Activated CD4-positive, alpha-beta memory T cell treated with anti-CD3 and anti-CD28 coated beads, Interleukin-2, amount 10 ng/mL, durations not matched to agents 7 days and 5 days (primary cell): ENCODE measurements at regions of chr15 and their contacts with region 1.

Region 1: GRCh38 chr15:63945007-63945788 is 101.1 kb downstream of the DAPK2 start:
- DNase-seq: peak; percentile 76
- H3K4me3 Mint-ChIP-seq: no peak overlapping the region
- H3K27ac Mint-ChIP-seq: no peak overlapping the region
- H3K4me1 Mint-ChIP-seq: peaks cover 18% of the 10 kb centered on the region
- H3K27me3 Mint-ChIP-seq: no peaks in the 10 kb centered on the region

Region 2: GRCh38 chr15:63876085-63876772 is 69.0 kb before region 1 on chr15:
- CTCF ChIA-PET with region 1: no interaction called
- POLR2A ChIA-PET with region 1: no interaction called
- DNase-seq: no peak
- H3K4me3 Mint-ChIP-seq: no peak overlapping the region
- H3K27ac Mint-ChIP-seq: no peak overlapping the region
- H3K4me1 Mint-ChIP-seq: no peaks in the 10 kb centered on the region
- H3K27me3 Mint-ChIP-seq: no peaks in the 10 kb centered on the region

Region 3: DNA sequence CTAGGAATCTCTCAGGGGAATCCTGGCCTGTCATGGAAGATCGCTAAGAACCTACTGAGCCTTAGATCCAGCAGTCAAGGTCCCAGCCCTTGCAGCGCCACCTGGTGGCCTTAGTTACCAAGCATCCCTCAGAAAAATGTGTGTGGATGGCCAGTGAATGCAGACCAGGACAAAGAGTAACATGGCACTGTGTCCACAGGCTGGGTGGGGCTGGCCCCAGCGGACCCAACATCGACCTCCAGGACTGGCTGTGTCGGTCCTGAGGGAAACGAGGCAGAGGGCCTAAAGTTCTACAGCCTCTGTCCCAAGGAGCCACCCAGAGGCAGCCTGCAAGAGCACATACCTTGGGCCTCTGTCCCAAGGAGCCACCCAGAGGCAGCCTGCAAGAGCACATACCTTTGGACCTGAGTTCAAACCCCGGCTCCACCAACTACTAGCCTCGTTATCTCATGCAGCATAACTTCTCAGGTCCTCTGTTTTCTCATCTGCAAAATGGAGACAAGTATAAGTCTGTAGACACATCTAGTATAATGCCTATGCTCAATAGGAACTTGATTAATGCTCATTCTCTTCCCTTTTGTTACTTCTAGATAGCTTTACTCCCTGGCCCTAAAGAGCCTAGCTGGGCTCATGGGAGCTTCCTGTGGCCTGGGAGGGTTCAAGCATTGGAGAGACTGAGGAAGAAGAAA is 54.0 kb before region 1 on chr15:
- CTCF ChIA-PET with region 1: interaction called, 16 read pairs
- POLR2A ChIA-PET with region 1: no interaction called
- DNase-seq: peak; percentile 77
- H3K4me3 Mint-ChIP-seq: no peak overlapping the region
- H3K27ac Mint-ChIP-seq: peak overlapping the region; percentile 28
- H3K4me1 Mint-ChIP-seq: peaks cover 46% of the 10 kb centered on the region
- H3K27me3 Mint-ChIP-seq: no peaks in the 10 kb centered on the region

Region 4: GRCh38 chr15:63933522-63933921 is 11.7 kb before region 1 on chr15:
- CTCF ChIA-PET with region 1: interaction called, 11 read pairs
- POLR2A ChIA-PET with region 1: interaction called, 4 read pairs
- DNase-seq: no peak
- H3K4me3 Mint-ChIP-seq: no peak overlapping the region
- H3K27ac Mint-ChIP-seq: no peak overlapping the region
- H3K4me1 Mint-ChIP-seq: peaks cover 11% of the 10 kb centered on the region
- H3K27me3 Mint-ChIP-seq: no peaks in the 10 kb centered on the region

Region 5: GRCh38 chr15:64010719-64011118 is 65.5 kb after region 1 on chr15:
- CTCF ChIA-PET with region 1: interaction called, 22 read pairs
- POLR2A ChIA-PET with region 1: interaction called, 7 read pairs
- DNase-seq: peak; percentile 92
- H3K4me3 Mint-ChIP-seq: peak overlapping the region; percentile 42
- H3K27ac Mint-ChIP-seq: peak overlapping the region; percentile 86
- H3K4me1 Mint-ChIP-seq: peaks cover 58% of the 10 kb centered on the region
- H3K27me3 Mint-ChIP-seq: no peaks in the 10 kb centered on the region

Region 6: GRCh38 chr15:64046347-64047153 is 101.4 kb after region 1 on chr15 and contains the start of gene DAPK2:
- CTCF ChIA-PET with region 1: interaction called, 34 read pairs
- POLR2A ChIA-PET with region 1: interaction called, 4 read pairs
- DNase-seq: peak; percentile 69
- H3K4me3 Mint-ChIP-seq: peak within 1 kb of the TSS; percentile 63
- H3K27ac Mint-ChIP-seq: no peak within 1 kb of the TSS
- H3K4me1 Mint-ChIP-seq: peaks cover 6% of the 10 kb centered on the region
- H3K27me3 Mint-ChIP-seq: peaks cover 11% of the 10 kb centered on the region
- total RNA-seq, gene DAPK2: 3.2 to 3.7 TPM